ENCODE measurements at regions of chr15 and their contacts with region 1.

Region 1: GRCh38 chr15:71743861-71744382 is 66.4 kb upstream of the NR2E3 start:
- DNase-seq: peak in 1 of 2 donors; percentile 75
- H3K4me3 ChIP-seq: no peak overlapping the region
- H3K27ac ChIP-seq: peak overlapping the region in 1 of 2 donors; percentile 60
- H3K4me1 ChIP-seq: peaks cover 0 to 8% of the 10 kb centered on the region in 2 donors
- H3K27me3 ChIP-seq: no peaks in the 10 kb centered on the region
- CTCF ChIP-seq: peak; percentile 39 to 70 (median 62)

Region 2: DNA sequence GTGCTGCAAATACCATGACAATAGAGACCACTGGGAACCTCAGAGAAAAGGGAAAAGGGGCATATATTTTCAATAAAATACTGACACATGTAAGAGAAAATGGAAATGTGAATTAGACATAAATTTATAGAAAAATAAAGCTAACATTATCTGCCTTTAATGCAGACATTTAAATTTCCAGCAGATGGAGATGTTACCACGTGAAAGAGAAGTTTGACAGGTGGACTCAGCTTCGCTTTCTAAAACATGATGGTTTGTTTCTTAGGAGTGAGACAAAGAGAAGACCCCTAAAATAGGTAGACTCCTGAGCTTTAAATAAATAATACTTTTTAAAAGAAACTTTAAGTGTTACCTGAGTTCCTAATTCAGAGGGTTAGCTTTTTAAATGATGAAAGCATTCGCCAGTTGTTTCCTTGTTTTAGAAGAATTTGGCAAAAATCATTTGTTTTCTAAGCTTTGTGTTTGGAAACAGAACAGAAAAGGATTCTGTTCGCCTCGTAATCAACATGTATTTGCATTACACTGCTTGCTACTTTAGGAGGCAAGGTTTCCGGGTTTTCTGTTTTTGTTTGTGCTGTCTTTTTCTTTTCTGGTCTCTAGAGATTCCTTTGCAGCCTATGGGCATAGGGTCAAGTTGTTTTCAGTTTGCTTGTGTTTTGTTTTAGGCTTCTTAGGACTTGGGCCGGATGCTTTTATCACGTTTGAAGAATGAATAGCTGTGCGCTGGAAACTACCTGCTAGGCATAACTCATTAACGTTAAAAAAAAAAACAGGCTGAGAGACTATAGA is 357.3 kb before region 1 on chr15:
- intact Hi-C with region 1: loop called (anchors 10 kb)
- DNase-seq: no peak
- H3K4me3 ChIP-seq: no peak overlapping the region
- H3K27ac ChIP-seq: peak overlapping the region in 1 of 2 donors; percentile 13
- H3K4me1 ChIP-seq: peaks cover 6 to 28% of the 10 kb centered on the region in 2 donors
- H3K27me3 ChIP-seq: no peaks in the 10 kb centered on the region
- CTCF ChIP-seq: peak; percentile 50 to 65 (median 52)

Region 3: GRCh38 chr15:71707230-71708050 is 36.5 kb before region 1 on chr15:
- intact Hi-C with region 1: no loop called
- DNase-seq: no peak
- H3K4me3 ChIP-seq: no peak overlapping the region
- H3K27ac ChIP-seq: peak overlapping the region; percentile 56 to 60
- H3K4me1 ChIP-seq: peaks cover 3 to 35% of the 10 kb centered on the region in 2 donors
- H3K27me3 ChIP-seq: no peaks in the 10 kb centered on the region
- CTCF ChIP-seq: no peak

Region 4: DNA sequence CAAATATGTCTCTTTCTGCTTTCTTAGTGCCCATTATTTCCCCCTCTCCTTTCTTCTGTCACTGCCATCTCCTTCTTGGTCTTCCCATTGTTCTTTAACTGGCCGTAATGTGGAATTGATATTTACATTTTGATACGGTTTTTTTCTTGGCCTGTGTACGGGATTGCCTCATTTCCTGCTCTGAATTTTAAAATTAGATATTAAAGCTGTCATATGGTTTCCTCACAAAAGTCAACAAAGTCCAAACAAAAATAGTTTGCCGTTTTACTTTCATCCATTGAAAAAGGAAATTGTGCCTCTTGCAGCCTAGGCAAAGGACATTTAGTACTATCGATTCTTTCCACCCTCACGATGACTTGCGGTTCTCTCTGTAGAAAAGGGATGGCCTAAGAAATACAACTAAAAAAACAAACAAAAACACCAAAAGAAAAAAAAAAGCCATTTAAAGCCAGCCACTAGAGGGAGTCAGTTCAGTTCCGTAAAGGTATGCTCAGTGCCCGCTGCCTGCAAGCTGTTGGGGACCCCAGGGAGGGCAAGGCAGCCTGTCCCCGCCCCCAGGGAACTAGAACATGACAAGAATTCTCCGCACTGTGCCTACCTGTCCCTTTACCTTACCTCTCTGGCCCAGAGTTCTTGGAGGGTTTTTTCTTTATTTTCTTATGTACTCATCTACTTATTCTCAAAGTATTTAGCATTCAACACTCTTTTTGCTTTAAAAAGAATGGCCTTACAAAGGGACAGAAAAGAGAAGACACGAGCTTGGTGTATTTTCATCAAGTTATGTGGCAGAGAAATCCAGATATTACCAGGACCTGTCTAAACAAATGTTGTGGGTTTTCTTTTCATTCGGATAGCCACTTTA is 36.4 kb after region 1 on chr15:
- intact Hi-C with region 1: loop called (anchors 5 kb)
- DNase-seq: peak in 1 of 2 donors; percentile 73
- H3K4me3 ChIP-seq: peak overlapping the region; percentile 6 to 10
- H3K27ac ChIP-seq: peak overlapping the region; percentile 75 to 85
- H3K4me1 ChIP-seq: peaks cover 10 to 38% of the 10 kb centered on the region in 2 donors
- H3K27me3 ChIP-seq: no peaks in the 10 kb centered on the region
- CTCF ChIP-seq: peak; percentile 30 to 73 (median 72)

Region 5: DNA sequence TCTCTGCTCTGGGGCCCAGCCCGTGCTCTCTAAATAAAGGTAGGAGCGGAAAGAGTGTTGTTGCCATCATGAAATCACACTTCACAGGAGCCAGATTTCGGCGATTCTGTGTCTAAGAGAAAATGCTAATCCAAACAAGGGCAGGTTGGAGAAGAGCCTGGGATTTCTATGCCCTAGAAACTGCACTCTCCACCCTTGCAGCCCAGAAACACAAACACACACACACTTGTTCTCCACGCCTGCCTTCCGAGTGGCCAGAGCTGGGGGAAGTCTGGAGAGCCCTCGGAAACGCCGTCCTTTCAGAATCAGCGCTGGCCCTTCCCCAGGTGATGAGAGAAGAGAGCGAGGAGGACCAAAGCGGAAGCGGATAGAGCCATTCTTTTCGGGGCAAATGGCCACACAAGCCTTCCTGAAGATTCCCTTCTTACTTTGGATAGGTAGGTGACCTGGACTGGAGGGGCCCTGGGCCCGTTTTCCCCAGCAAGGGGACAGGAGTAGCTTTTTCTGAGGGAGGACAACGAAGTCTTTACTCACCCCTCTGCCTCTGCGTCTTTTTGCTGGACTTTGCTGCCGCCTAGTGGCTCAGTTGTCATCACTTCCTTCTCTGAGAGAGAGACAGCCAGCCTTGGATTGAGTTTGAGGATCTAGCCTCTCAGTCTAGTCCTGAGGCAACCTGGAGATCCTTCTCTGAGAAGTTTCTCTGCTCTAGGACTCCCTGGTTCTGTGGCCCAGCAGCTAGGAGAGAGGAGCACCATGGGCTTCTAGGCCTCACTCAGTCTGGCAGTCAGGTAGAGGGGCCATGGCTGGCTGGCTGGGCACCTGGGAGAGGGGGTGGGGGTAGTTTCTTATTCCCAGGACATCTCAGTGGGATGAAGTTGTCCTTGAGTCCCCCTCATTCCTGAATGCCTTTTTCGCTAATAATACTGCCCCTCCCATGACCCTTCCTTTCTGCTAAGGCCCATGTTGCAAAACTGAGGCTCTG is 412.0 kb after region 1 on chr15:
- intact Hi-C with region 1: loop called (anchors 5 kb)
- DNase-seq: peak in 1 of 2 donors; percentile 93
- H3K4me3 ChIP-seq: peak overlapping the region; percentile 54 to 64
- H3K27ac ChIP-seq: peak overlapping the region; percentile 47 to 82
- H3K4me1 ChIP-seq: peaks cover 0 to 6% of the 10 kb centered on the region in 2 donors
- H3K27me3 ChIP-seq: no peaks in the 10 kb centered on the region
- CTCF ChIP-seq: peak; percentile 81 to 88 (median 83)

Measured in ascending aorta (tissue), 2 donors.